WTC11 (cell line): ENCODE measurements at regions of chr10 and their contacts with region 1.

Region 1: GRCh38 chr10:99612167-99612831 is 7.9 kb downstream of the SLC25A28 start:
- DNase-seq: peak; percentile 23
- ATAC-seq: peak; percentile 87
- H3K4me3 Mint-ChIP-seq: no peak overlapping the region
- H3K27ac Mint-ChIP-seq: no peak overlapping the region
- H3K4me1 Mint-ChIP-seq: peaks cover 6% of the 10 kb centered on the region
- H3K27me3 Mint-ChIP-seq: no peaks in the 10 kb centered on the region
- CTCF ChIP-seq: peak; percentile 73

Region 2: DNA sequence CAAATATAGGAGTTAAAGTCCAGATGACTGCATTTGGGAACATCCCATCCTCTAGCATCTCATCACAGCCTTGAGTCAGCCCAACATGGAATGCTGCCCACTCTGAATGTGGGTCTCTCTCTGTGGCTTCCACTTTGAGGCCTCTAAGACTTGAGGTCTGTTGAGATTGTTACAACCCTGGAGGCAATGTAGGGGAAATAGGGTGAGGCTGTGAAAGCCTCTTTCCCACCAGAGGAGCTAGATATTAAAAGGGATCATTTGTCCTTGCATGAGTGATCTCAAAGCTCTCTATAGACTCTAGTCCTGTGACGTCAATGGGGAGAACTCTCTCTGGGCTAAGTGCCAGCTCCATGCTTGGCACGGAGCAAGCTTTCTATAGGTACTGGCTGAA is 1769.0 kb before region 1 on chr10:
- CTCF ChIA-PET with region 1: no interaction called
- POLR2A ChIA-PET with region 1: interaction called, 10 read pairs
- DNase-seq: no peak
- ATAC-seq: no peak
- H3K4me3 Mint-ChIP-seq: no peak overlapping the region
- H3K27ac Mint-ChIP-seq: no peak overlapping the region
- H3K4me1 Mint-ChIP-seq: no peaks in the 10 kb centered on the region
- H3K27me3 Mint-ChIP-seq: peaks cover 6% of the 10 kb centered on the region
- CTCF ChIP-seq: no peak

Region 3: DNA sequence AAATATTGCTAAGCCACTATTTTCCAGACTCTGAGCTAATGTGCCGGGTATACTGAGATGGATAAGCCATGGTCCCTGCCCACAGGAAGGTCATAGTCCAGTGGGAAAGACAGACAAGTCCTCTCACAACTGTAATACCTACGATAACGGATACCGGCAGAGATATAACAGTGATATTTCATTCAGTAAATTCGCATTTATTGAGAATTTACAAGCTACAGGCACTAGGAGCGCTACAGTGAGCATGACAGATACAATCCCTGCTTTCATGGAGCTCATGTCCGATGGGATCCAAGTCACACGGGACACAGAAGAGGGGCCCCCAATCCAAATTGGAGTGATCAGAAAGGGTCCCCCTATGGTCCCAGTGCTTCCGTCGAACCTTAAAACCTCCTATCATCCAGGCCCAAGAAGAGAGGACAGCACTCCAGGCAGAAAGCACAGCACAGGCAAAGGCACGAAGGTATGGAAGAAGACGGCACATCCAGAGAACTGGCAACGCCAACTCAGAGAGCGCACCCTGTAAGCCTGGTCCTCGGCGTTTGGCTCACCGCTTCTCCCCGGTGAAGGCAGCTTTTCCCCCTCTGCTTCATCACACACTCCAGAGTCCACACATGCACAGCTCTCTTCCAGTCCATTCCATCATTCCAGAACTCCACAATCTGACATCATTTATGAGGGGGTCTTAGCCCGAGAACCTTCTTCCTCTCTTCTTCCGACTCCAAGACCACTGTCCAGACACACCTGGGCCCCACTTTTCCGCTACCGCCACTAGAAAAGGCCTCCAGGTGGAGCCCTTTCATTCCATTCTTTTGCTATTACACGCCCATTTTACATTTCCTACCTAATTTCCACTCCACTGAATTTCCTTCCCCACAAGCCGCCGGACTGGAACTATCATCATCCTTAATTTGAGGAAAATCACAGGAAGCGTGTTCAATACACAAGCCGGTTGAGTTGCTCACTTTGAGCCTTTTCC is 127.4 kb before region 1 on chr10:
- CTCF ChIA-PET with region 1: interaction called, 11 read pairs
- POLR2A ChIA-PET with region 1: no interaction called
- DNase-seq: peak; percentile 50
- ATAC-seq: peak; percentile 82
- H3K4me3 Mint-ChIP-seq: no peak overlapping the region
- H3K27ac Mint-ChIP-seq: no peak overlapping the region
- H3K4me1 Mint-ChIP-seq: no peaks in the 10 kb centered on the region
- H3K27me3 Mint-ChIP-seq: peaks cover 22% of the 10 kb centered on the region
- CTCF ChIP-seq: peak; percentile 44; the same call in 1 of the 2 replicates

Region 4: GRCh38 chr10:99560277-99561126 is 51.8 kb before region 1 on chr10:
- CTCF ChIA-PET with region 1: interaction called, 78 read pairs
- POLR2A ChIA-PET with region 1: interaction called, 7 read pairs
- DNase-seq: peak; percentile 76
- ATAC-seq: peak; percentile 91
- H3K4me3 Mint-ChIP-seq: no peak overlapping the region
- H3K27ac Mint-ChIP-seq: no peak overlapping the region
- H3K4me1 Mint-ChIP-seq: peaks cover 13% of the 10 kb centered on the region
- H3K27me3 Mint-ChIP-seq: no peaks in the 10 kb centered on the region
- CTCF ChIP-seq: peak; percentile 93

Region 5: DNA sequence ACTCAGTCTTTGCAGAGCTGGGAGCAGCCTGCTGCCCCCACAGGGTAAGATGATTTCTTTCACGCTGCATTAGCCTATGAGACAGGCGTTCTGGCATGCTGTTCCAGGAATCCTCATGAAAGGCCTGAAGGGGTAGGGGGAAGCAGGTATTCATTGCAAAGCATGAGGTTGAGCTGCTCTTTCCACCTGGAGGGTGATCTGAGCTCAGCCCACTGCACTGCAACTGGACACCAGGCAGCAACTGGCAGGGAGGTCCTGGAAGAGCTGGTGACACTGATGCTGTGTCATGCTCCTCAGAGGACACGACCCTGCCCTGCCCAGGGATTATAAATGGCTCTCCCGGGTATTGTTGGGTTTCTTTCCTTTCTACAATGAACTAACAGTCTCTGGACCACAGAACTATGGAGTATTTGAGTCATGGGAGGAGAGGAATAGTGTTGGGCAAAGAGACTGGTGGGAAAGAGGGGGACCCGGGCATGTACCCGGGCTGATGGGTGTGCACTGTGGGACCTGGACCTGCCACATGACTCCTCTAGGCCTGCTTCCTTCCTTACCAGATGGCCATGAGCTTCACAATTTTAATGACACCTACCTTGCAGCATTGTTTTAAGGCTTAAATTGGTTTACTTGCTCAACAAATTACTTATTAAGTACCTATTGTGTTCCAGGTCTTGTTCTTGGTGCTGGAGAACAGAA is 16.4 kb before region 1 on chr10:
- CTCF ChIA-PET with region 1: interaction called, 10 read pairs
- POLR2A ChIA-PET with region 1: no interaction called
- DNase-seq: no peak
- ATAC-seq: peak; percentile 71
- H3K4me3 Mint-ChIP-seq: no peak overlapping the region
- H3K27ac Mint-ChIP-seq: no peak overlapping the region
- H3K4me1 Mint-ChIP-seq: peaks cover 18% of the 10 kb centered on the region
- H3K27me3 Mint-ChIP-seq: no peaks in the 10 kb centered on the region
- CTCF ChIP-seq: no peak

Region 6: DNA sequence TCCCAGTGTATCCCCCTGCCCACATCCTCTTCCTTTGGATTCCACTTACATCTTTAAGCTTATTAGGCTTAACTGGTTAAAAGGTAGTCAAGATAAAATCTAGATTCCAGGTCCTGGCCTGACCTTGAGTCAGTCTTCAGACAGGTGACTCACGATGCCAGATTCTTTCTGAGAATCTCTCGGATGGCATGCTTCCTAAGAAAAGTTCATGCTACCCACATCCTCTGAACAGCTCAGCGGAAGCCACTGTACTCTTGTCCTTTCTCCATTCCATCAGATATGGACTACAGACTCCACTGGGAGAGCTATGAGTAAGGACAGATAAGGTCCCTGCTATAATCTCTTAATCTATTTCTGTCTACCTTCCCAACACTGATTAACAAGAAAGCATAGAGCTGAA is 354.0 kb after region 1 on chr10:
- CTCF ChIA-PET with region 1: no interaction called
- POLR2A ChIA-PET with region 1: no interaction called
- DNase-seq: no peak
- ATAC-seq: no peak
- H3K4me3 Mint-ChIP-seq: no peak overlapping the region
- H3K27ac Mint-ChIP-seq: peak overlapping the region; percentile 39; the same call in 1 of the 2 replicates
- H3K4me1 Mint-ChIP-seq: no peaks in the 10 kb centered on the region
- H3K27me3 Mint-ChIP-seq: no peaks in the 10 kb centered on the region
- CTCF ChIP-seq: no peak